ENCODE measurements at regions of chr7 and their contacts with region 1.

Region 1: DNA sequence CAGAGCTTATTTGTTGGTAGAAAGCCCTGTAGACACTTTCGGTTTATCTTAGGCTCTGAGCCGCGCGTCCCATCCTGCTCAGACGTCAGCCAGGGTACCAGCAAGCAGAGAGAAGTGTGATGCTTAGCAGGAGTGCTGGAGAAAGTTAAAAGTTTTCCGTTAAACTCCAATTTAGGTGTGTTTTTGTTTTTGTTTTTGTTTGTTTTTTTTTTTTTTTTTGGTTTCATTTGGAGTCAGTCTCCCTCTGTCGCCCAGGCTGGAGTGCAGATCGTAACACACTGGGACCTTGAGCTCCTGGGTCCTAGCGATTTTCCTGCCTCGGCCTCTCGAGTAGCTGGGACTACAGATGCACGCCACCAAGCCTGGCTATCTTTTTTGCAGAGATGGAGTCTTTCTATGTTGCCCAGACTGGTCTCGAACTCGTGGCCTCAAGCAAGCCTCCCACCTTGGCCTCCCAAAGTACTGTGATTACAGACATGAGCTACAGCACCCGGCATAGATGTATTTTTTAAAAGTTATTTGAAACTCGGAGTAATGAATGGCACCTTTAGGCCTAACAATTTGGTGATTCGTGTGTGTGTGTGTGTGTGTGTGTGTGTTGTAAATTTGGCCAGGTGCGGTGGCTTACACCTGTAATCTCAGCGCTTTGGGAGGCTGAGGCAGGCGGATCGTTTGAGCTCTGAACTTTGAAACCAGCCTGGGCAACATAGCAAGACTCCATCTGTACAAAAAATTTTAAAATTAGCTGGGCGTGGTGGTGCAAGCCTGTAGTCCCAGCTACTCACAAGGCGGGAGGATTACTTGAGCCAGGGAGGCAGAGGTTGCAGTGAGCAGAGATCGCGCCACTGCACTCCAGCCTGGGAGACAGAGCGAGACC is 1.3 kb upstream of the HIP1 start:
- DNase-seq: no peak
- H3K4me3 ChIP-seq: peak overlapping the region; percentile 75 to 100 (median 94)
- H3K27ac ChIP-seq: peak overlapping the region; percentile 89 to 92 (median 91)
- H3K4me1 ChIP-seq: peaks cover 18 to 32% (median 28%) of the 10 kb centered on the region in 4 donors
- H3K27me3 ChIP-seq: no peaks in the 10 kb centered on the region
- CTCF ChIP-seq: no peak
- EP300 ChIP-seq: no peak
- POLR2A ChIP-seq: no peak

Region 2: DNA sequence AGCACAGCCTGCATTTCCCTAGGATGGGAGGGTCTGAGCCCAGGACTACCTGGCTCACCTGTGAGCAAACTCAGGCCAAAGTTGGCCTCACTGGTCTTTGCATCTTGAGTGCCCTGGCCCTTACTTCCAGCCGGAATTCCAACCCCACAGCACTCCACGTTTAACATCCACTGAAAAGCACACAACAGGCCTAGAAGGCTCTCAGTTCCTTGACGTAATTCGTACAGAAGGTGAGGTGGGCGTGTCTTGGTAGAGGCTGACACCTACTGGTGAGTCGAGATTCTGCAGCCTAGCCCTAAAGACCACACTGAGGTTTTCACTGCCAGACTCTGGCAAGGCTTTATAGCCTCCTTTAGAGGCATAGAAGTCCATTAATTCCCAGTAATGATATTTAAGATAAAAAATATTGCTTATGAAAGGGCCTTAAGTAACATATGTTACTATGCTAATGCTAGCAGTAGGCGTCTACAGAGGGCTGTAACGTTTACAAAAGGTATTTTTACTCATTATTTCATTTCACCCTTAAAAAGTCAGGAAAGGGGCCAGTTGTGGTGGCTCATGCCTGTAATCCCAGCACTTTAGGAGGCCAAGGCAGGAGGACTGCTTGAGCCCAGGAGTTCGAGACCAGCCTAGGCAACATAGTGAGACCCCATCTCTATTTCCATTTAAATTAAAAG is 97.1 kb before region 1 on chr7:
- intact Hi-C with region 1: loop called (anchors 10 kb)
- DNase-seq: no peak
- H3K4me3 ChIP-seq: no peak overlapping the region
- H3K27ac ChIP-seq: no peak overlapping the region
- H3K4me1 ChIP-seq: peaks cover 6 to 20% (median 19%) of the 10 kb centered on the region in 4 donors
- H3K27me3 ChIP-seq: no peaks in the 10 kb centered on the region
- CTCF ChIP-seq: peak; percentile 60 to 81 (median 65)
- EP300 ChIP-seq: no peak
- POLR2A ChIP-seq: no peak

Measured in esophagus muscularis mucosa (tissue), 4 donors.